ENCODE measurements at regions of chr7 and their contacts with region 1.

Region 1: DNA sequence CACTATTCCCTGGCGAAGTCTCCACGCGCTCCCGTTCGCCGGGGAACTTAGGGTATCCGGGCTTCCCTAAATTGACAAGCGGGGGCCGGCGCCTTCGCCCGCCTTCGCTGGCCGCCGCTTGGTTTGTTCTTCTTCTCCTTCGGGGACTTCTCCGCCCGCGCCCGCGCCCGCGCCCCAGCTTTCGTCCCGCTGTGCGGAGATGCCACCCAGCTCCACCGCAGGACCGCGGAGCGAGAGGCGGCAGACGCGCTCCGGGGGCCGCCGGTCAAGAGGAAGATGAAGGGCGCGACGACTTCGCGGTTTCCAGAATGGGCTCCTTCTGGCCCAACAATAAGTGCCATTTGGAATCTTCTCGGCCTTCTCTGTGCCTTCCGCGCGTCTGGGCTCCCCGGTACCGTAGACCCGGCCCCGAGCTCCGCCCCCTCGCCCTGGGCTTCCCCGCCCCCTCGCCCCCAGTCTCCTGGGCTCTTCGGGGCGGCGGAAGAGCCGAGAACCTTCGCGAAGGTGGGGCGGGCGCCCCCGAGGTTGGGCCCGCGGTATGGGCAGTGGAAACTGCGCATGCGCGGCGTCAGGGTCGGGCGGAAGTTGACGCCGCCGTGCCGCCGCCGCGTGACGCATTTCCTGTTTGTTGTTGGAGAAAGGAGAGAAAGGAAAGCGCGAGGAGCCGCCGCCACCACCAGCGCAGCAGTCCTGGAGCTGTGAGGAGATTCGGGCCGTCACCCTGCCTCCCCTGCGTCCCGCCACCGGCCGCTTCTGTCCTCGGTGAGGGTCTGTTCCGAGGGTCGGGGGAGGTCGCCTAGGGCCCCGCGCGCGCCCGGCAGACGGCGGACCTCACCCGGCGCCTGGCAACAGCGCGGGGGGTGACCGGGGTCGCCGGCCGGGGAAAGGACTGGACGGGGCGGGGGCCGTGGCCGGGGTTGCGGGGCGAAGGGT is at the start of gene DNAJB6:
- DNase-seq: no peak
- ATAC-seq: peak; percentile 83
- H3K4me3 ChIP-seq: peak within 1 kb of the TSS; percentile 78 to 92
- H3K27ac ChIP-seq: peak within 1 kb of the TSS; percentile 93
- H3K4me1 ChIP-seq: peaks cover 33% of the 10 kb centered on the region
- H3K27me3 ChIP-seq: no peaks in the 10 kb centered on the region
- CTCF ChIP-seq: no peak
- total RNA-seq, gene DNAJB6: 201 TPM

Region 2: GRCh38 chr7:157306846-157307838 is 29.5 kb before region 1 on chr7:
- CTCF ChIA-PET with region 1: interaction called, 4 read pairs
- POLR2A ChIA-PET with region 1: interaction called, 10 read pairs
- in situ Hi-C with region 1: no loop called
- intact Hi-C with region 1: no loop called
- DNase-seq: no peak
- ATAC-seq: no peak
- H3K4me3 ChIP-seq: no peak overlapping the region
- H3K27ac ChIP-seq: peak overlapping the region; percentile 66
- H3K4me1 ChIP-seq: peaks cover 36% of the 10 kb centered on the region
- H3K27me3 ChIP-seq: no peaks in the 10 kb centered on the region
- CTCF ChIP-seq: no peak

Region 3: DNA sequence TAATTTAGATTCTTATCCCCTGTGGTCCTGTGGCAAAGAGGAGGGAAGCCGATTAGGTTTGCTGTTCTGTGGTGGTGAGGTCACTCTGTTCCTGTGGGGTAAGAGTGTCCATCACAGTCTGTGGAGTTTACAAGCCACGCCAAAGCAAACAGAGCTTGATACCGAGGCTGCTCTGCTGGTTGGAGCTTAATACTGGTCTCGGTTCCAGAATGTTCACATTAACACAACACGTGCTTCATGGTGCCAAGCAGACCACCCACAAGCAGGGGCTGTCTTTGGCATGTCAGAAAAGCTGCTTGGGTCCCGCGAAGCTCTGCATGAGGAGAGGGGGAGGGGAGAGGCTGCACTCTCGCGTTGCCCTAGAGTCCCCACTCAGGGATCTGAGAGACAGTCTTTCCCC is 47.7 kb after region 1 on chr7:
- CTCF ChIA-PET with region 1: no interaction called
- POLR2A ChIA-PET with region 1: interaction called, 6 read pairs
- in situ Hi-C with region 1: loop called (anchors 5 kb)
- intact Hi-C with region 1: no loop called
- DNase-seq: no peak
- ATAC-seq: no peak
- H3K4me3 ChIP-seq: no peak overlapping the region
- H3K27ac ChIP-seq: no peak overlapping the region; the same call in 1 of the 2 replicates
- H3K4me1 ChIP-seq: peaks cover 15% of the 10 kb centered on the region
- H3K27me3 ChIP-seq: no peaks in the 10 kb centered on the region
- CTCF ChIP-seq: no peak

Region 4: DNA sequence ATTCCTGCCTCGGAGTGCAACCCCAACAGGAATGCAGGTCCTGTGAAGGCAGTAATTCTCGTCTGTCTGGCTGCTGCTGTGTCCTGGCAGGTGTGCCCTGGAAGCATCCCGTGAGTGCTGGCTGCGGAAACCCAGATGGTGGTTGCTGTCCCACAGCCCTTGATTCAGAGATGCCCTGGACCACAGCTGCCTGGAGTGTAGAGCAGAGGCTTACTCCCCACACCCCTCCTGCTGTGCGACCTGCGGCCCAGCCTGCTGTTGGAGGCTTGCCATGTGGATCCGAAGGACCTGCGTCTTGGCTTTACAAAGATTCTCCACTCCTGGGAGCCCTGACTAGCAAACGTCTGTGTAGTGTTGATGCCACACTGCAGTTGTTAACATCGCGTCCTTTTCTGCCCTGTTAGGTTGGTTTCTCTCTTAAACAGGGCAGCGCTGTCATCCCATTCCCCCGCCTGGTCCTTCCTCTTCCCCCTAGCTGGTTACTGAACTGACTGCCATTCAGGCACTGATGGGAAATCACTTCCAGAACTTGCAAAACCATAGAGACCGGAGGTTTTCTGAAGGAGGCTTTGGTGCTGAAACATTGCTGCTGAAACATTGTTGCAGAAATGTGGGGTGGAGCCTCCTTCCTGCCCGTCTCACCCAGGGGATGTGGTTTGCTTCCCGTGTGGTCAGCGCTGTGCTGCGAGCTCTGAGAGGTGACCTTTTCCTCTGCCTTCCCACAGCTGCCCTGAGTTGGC is 53.5 kb after region 1 on chr7:
- CTCF ChIA-PET with region 1: interaction called, 15 read pairs
- POLR2A ChIA-PET with region 1: interaction called, 6 read pairs
- in situ Hi-C with region 1: no loop called
- intact Hi-C with region 1: no loop called
- DNase-seq: no peak
- ATAC-seq: no peak
- H3K4me3 ChIP-seq: no peak overlapping the region
- H3K27ac ChIP-seq: no peak overlapping the region
- H3K4me1 ChIP-seq: peaks cover 8% of the 10 kb centered on the region; the same call in 1 of the 2 replicates
- H3K27me3 ChIP-seq: no peaks in the 10 kb centered on the region
- CTCF ChIP-seq: no peak

Measured in Panc1 (cell line).